K562 (cell line): ENCODE measurements at regions of chr6 and their contacts with region 1.

Region 1: GRCh38 chr6:37051138-37052026 is 45.9 kb downstream of the FGD2 start:
- DNase-seq: peak; percentile 86 to 94 (median 87)
- ATAC-seq: peak; percentile 75
- H3K4me3 ChIP-seq: no peak overlapping the region
- H3K27ac ChIP-seq: peak overlapping the region; percentile 95
- H3K4me1 ChIP-seq: peaks cover 52 to 77% of the 10 kb centered on the region in 2 experiments
- H3K27me3 ChIP-seq: no peaks in the 10 kb centered on the region
- CTCF ChIP-seq: peak; percentile 96 to 97 (median 96)
- EP300 ChIP-seq: peak; percentile 35; the same call in 1 of the 2 replicates
- POLR2A ChIP-seq: no peak
- RAD21 ChIP-seq: peak; percentile 98 to 99

Region 2: GRCh38 chr6:37029249-37029971 is 22.0 kb before region 1 on chr6:
- CTCF ChIA-PET with region 1: interaction called, 3 read pairs
- POLR2A ChIA-PET with region 1: interaction called, 5 read pairs
- in situ Hi-C with region 1: no loop called
- intact Hi-C with region 1: loop called (anchors 1 kb)
- DNase-seq: peak; percentile 91 to 97 (median 94)
- ATAC-seq: peak; percentile 99
- H3K4me3 ChIP-seq: no peak overlapping the region
- H3K27ac ChIP-seq: peak overlapping the region; percentile 46
- H3K4me1 ChIP-seq: peaks cover 15 to 63% of the 10 kb centered on the region in 2 experiments
- H3K27me3 ChIP-seq: no peaks in the 10 kb centered on the region
- CTCF ChIP-seq: peak; percentile 96 to 99 (median 97)
- EP300 ChIP-seq: peak; percentile 76
- POLR2A ChIP-seq: no peak
- RAD21 ChIP-seq: peak; percentile 99 to 100

Region 3: GRCh38 chr6:37038292-37039198 is 12.8 kb before region 1 on chr6:
- CTCF ChIA-PET with region 1: no interaction called
- POLR2A ChIA-PET with region 1: interaction called, 5 read pairs
- in situ Hi-C with region 1: no loop called
- intact Hi-C with region 1: loop called (anchors 1 kb)
- DNase-seq: peak; percentile 68 to 89 (median 72)
- ATAC-seq: peak; percentile 86
- H3K4me3 ChIP-seq: no peak overlapping the region
- H3K27ac ChIP-seq: peak overlapping the region; percentile 71
- H3K4me1 ChIP-seq: peaks cover 32% of the 10 kb centered on the region in 2 experiments
- H3K27me3 ChIP-seq: no peaks in the 10 kb centered on the region
- CTCF ChIP-seq: no peak
- EP300 ChIP-seq: peak; percentile 62; the same call in 1 of the 2 replicates
- POLR2A ChIP-seq: no peak
- RAD21 ChIP-seq: no peak

Region 4: DNA sequence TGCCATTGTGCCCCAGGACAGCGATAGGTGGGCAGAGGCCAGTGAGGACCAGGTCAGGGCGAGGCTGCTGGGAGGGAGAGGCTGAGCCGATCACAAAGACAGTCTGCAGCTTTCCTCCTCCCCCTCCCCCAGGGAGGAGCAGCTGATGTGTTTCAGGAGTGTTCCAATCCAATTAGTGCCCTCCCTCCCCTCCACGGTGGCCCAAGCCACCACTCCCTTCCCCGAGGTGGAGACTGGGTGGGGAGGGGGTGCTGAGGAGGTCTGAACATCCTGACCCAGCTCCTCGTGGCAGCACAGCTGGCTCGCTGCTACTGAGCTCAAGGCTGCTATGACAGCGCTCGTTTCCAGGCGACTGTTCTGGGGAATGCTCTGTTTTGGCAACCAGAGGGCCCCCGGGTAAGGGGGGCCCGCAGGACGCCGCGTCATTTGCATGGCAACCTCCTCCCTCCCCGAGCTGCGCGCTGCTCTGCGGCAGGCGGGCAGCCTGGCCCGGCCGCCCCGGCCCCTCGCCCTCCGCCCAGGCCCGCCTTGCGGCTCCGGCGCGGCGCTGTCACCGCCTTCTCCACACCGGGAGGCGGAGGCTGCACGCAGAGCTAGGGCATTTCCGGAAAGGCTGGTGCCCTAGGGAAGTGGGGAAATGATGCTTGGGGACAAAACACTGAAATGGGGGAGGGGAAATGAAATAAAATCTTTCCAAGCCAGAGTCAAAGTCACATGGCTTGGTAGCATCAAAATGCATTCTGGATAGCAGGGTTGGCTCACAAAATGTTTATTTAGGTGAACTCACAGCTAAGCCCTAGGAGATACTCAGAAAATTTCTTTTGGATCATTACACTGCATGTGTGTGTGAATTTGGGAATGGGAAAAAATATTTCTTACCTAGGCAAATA is 51.1 kb after region 1 on chr6:
- CTCF ChIA-PET with region 1: no interaction called
- POLR2A ChIA-PET with region 1: no interaction called
- in situ Hi-C with region 1: no loop called
- intact Hi-C with region 1: loop called (anchors 2 kb)
- DNase-seq: peak; percentile 81 to 87 (median 84)
- ATAC-seq: peak; percentile 83
- H3K4me3 ChIP-seq: peak overlapping the region; percentile 33
- H3K27ac ChIP-seq: peak overlapping the region; percentile 63
- H3K4me1 ChIP-seq: peaks cover 45 to 56% of the 10 kb centered on the region in 2 experiments
- H3K27me3 ChIP-seq: no peaks in the 10 kb centered on the region
- CTCF ChIP-seq: 0 out of 6 replicates have a peak, but pooled peaks of 1 of the 3 experiments have one; percentile 0
- EP300 ChIP-seq: no peak
- POLR2A ChIP-seq: peak; percentile 37; the same call in 1 of the 2 replicates
- RAD21 ChIP-seq: no peak; a peak in 2 of 4 replicates

Region 5: GRCh38 chr6:37149745-37150144 is 98.4 kb after region 1 on chr6:
- CTCF ChIA-PET with region 1: no interaction called
- POLR2A ChIA-PET with region 1: no interaction called
- in situ Hi-C with region 1: no loop called
- intact Hi-C with region 1: no loop called
- DNase-seq: no peak
- ATAC-seq: no peak
- H3K4me3 ChIP-seq: no peak overlapping the region
- H3K27ac ChIP-seq: no peak overlapping the region
- H3K4me1 ChIP-seq: peaks cover 0 to 1% of the 10 kb centered on the region in 2 experiments; a peak in 2 of 5 replicates
- H3K27me3 ChIP-seq: no peaks in the 10 kb centered on the region
- CTCF ChIP-seq: no peak
- EP300 ChIP-seq: no peak
- POLR2A ChIP-seq: no peak
- RAD21 ChIP-seq: no peak

Region 6: DNA sequence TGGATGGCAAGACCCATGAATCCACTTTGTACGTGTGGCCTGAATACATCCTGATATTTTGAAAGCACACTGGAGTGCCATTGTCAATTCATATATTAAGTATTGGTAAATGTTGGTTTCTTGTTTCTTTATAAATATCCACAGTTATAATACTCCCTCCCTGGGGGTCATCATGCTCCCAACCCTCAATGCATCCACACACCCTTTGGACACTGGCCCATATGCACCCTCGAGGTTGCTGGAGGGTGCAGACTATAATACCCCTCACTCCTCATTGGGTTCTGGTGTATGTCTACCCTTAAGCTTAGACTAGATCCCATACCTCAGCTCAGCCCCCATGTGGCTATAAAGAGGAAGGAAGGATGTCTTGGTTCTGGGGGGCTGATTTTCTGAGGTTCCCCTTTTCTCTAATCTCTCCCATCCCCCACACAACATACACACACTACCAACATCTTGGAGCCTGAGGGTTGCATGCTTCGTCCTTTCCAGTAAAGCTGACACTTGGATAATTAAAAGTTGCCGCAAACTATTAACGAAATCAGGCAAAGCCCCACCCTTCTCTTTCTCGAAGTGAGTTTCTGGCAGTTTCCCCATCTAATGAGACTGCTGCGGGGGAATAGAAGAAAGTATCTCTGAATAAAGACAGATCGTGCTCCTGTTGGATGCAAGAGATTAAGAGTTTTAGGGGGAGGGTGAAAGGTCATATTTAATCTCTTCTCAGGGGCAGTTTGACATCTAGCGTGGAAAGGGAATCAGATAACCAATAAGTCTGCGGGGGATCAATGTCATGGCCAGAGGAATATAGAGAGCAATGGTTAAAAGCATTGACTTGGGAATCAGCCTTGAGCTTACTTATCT is 125.9 kb after region 1 on chr6:
- CTCF ChIA-PET with region 1: interaction called, 83 read pairs
- POLR2A ChIA-PET with region 1: interaction called, 36 read pairs
- in situ Hi-C with region 1: loop called (anchors 5 kb)
- intact Hi-C with region 1: loop called (anchors 1 kb)
- DNase-seq: peak; percentile 41 to 83 (median 62)
- ATAC-seq: peak; percentile 59
- H3K4me3 ChIP-seq: no peak overlapping the region
- H3K27ac ChIP-seq: peak overlapping the region; percentile 82
- H3K4me1 ChIP-seq: peaks cover 32 to 52% of the 10 kb centered on the region in 2 experiments
- H3K27me3 ChIP-seq: no peaks in the 10 kb centered on the region
- CTCF ChIP-seq: peak; percentile 43 to 61 (median 53); a peak in 5 of 6 replicates
- EP300 ChIP-seq: peak; percentile 56
- POLR2A ChIP-seq: no peak; the same call in 1 of the 2 replicates
- RAD21 ChIP-seq: peak; percentile 47 to 71

Region 7: GRCh38 chr6:37182736-37183590 is 131.6 kb after region 1 on chr6:
- CTCF ChIA-PET with region 1: no interaction called
- POLR2A ChIA-PET with region 1: interaction called, 4 read pairs
- in situ Hi-C with region 1: no loop called
- intact Hi-C with region 1: loop called (anchors 1 kb)
- DNase-seq: peak; percentile 65 to 99 (median 78)
- ATAC-seq: peak; percentile 90
- H3K4me3 ChIP-seq: no peak overlapping the region
- H3K27ac ChIP-seq: peak overlapping the region; percentile 97
- H3K4me1 ChIP-seq: peaks cover 58 to 65% of the 10 kb centered on the region in 2 experiments
- H3K27me3 ChIP-seq: no peaks in the 10 kb centered on the region
- CTCF ChIP-seq: no peak
- EP300 ChIP-seq: peak; percentile 100
- POLR2A ChIP-seq: peak; percentile 60
- RAD21 ChIP-seq: peak; percentile 29 to 43; a peak in 3 of 4 replicates